ENCODE measurements at regions of chr11 and their contacts with region 1.

Region 1: GRCh38 chr11:69101115-69101791 is 52.5 kb downstream of the TPCN2 start:
- DNase-seq: peak; percentile 81 to 91
- ATAC-seq: peak; percentile 80 to 89
- H3K4me3 ChIP-seq: no peak overlapping the region
- H3K27ac ChIP-seq: peak overlapping the region; percentile 63 to 71; a peak in 5 of 6 replicates
- H3K4me1 ChIP-seq: peaks cover 28% of the 10 kb centered on the region
- CTCF ChIP-seq: peak; percentile 97
- EP300 ChIP-seq: no peak
- POLR2A ChIP-seq: no peak
- RAD21 ChIP-seq: peak; percentile 99

Region 2: GRCh38 chr11:69115586-69116560 is 14.6 kb after region 1 on chr11:
- CTCF ChIA-PET with region 1: interaction called, 41 read pairs
- POLR2A ChIA-PET with region 1: no interaction called
- DNase-seq: peak in 1 of 2 experiments; percentile 35
- ATAC-seq: peak; percentile 31 to 34; a peak in 3 of 6 replicates
- H3K4me3 ChIP-seq: no peak overlapping the region
- H3K27ac ChIP-seq: peak overlapping the region; percentile 65 to 74
- H3K4me1 ChIP-seq: peaks cover 17% of the 10 kb centered on the region
- CTCF ChIP-seq: no peak
- EP300 ChIP-seq: no peak
- POLR2A ChIP-seq: no peak
- RAD21 ChIP-seq: no peak

Region 3: DNA sequence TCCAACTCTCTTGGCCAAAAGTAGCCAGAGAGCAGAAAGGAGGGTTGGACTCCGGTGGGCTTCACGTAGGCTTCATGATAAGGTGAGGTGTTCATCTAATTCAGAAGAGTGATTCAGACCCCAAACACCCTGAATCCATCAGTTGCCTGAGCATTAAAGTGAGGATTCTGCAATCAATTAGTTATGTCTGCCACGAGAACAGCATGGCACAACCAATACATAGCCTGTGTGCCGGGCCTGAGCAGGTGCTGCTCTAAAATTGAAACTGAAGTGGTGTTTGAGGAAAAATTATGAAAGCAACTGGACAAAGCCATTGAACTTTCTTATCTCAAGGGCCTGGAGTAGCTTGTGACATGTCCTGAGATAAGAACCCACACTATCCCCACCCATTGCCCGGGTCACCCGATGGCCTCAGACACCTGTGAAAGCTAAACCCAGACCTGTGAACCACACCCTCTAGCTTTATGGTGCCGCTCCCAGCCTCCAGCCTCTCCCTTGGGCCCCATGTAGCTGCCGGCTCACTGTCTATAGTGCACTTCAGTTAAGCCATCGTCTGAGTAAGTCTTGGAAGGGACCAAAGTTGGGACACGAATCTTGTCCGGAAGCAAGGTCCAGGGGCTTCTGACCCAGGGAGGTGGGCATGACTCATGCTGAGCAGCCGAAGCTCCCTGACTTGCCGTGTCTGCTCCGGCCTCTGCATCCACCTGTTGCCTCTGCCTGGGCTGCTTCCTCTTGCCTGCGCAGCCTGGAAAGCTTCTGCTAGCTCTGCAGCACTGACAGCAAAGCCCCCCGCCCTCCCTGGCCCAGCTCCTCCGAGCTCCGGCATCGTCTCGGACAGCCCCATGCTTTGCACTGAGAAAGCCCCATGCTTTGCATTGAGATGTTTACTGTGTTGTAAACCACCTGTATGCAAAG is 187.0 kb after region 1 on chr11:
- CTCF ChIA-PET with region 1: interaction called, 34 read pairs
- POLR2A ChIA-PET with region 1: no interaction called
- DNase-seq: no peak
- ATAC-seq: no peak
- H3K4me3 ChIP-seq: no peak overlapping the region
- H3K27ac ChIP-seq: no peak overlapping the region
- H3K4me1 ChIP-seq: peaks cover 8% of the 10 kb centered on the region
- CTCF ChIP-seq: no peak
- EP300 ChIP-seq: no peak
- POLR2A ChIP-seq: no peak
- RAD21 ChIP-seq: no peak

Region 4: GRCh38 chr11:69634590-69634989 is 533.3 kb after region 1 on chr11:
- CTCF ChIA-PET with region 1: interaction called, 11 read pairs
- POLR2A ChIA-PET with region 1: interaction called, 7 read pairs
- DNase-seq: no peak
- ATAC-seq: no peak
- H3K4me3 ChIP-seq: no peak overlapping the region
- H3K27ac ChIP-seq: peak overlapping the region in 1 of 2 experiments; percentile 26; a peak in 1 of 6 replicates
- H3K4me1 ChIP-seq: peaks cover 17% of the 10 kb centered on the region
- CTCF ChIP-seq: no peak
- EP300 ChIP-seq: no peak
- POLR2A ChIP-seq: no peak
- RAD21 ChIP-seq: no peak

Region 5: GRCh38 chr11:69662017-69662698 is 560.9 kb after region 1 on chr11:
- CTCF ChIA-PET with region 1: interaction called, 220 read pairs
- POLR2A ChIA-PET with region 1: no interaction called
- DNase-seq: peak in 1 of 2 experiments; percentile 55
- ATAC-seq: peak; percentile 57 to 67; a peak in 5 of 6 replicates
- H3K4me3 ChIP-seq: no peak overlapping the region
- H3K27ac ChIP-seq: no peak overlapping the region
- H3K4me1 ChIP-seq: no peaks in the 10 kb centered on the region; the same call in 2 of the 3 replicates
- CTCF ChIP-seq: no peak
- EP300 ChIP-seq: no peak
- POLR2A ChIP-seq: no peak
- RAD21 ChIP-seq: peak in 1 of 2 experiments; percentile 34; a peak in 1 of 5 replicates

Measured in A549 (cell line).